Activated CD4-positive, alpha-beta memory T cell treated with anti-CD3 and anti-CD28 coated beads for 36 hours (primary cell): ENCODE measurements at regions of chr6 and their contacts with region 1.

Region 1: GRCh38 chr6:105920071-105920470 is 166.1 kb upstream of the PRDM1 start:
- DNase-seq: peak; percentile 50
- H3K4me3 Mint-ChIP-seq: no peak overlapping the region
- H3K27ac Mint-ChIP-seq: peak overlapping the region; percentile 74
- H3K4me1 Mint-ChIP-seq: peaks cover 13% of the 10 kb centered on the region
- H3K27me3 Mint-ChIP-seq: peaks cover 7% of the 10 kb centered on the region

Region 2: DNA sequence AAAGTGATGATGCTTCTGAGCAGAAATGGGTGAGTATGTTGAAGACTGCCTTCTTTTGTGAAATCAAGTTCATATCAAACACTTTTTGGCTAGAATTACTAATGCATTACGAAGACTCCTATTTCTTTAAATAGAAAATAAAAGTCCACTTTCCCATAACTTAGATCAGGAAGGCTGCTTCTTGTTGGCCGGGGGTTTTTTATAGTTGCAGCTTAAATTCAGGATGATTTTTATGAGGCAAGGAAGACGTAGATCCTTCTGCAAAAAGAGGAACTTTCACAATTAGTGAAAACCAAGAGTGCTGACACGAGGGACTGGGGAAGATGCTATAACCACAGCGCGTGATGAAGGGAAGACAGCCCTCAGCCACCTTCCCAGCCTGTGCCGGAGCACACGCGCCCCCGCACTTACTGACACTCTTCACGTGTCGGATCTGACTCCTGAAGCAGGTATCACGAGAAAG is 40.0 kb before region 1 on chr6:
- CTCF ChIA-PET with region 1: no interaction called
- POLR2A ChIA-PET with region 1: no interaction called
- intact Hi-C with region 1: loop called (anchors 1 kb)
- DNase-seq: peak; percentile 75
- H3K4me3 Mint-ChIP-seq: peak overlapping the region; percentile 31
- H3K27ac Mint-ChIP-seq: peak overlapping the region; percentile 44
- H3K4me1 Mint-ChIP-seq: peaks cover 26% of the 10 kb centered on the region
- H3K27me3 Mint-ChIP-seq: peaks cover 37% of the 10 kb centered on the region

Region 3: GRCh38 chr6:105909106-105909505 is 11.0 kb before region 1 on chr6:
- CTCF ChIA-PET with region 1: no interaction called
- POLR2A ChIA-PET with region 1: no interaction called
- intact Hi-C with region 1: no loop called
- DNase-seq: no peak
- H3K4me3 Mint-ChIP-seq: no peak overlapping the region
- H3K27ac Mint-ChIP-seq: no peak overlapping the region
- H3K4me1 Mint-ChIP-seq: no peaks in the 10 kb centered on the region
- H3K27me3 Mint-ChIP-seq: peaks cover 2% of the 10 kb centered on the region